ENCODE measurements at regions of chr1 and their contacts with region 1.

Region 1: DNA sequence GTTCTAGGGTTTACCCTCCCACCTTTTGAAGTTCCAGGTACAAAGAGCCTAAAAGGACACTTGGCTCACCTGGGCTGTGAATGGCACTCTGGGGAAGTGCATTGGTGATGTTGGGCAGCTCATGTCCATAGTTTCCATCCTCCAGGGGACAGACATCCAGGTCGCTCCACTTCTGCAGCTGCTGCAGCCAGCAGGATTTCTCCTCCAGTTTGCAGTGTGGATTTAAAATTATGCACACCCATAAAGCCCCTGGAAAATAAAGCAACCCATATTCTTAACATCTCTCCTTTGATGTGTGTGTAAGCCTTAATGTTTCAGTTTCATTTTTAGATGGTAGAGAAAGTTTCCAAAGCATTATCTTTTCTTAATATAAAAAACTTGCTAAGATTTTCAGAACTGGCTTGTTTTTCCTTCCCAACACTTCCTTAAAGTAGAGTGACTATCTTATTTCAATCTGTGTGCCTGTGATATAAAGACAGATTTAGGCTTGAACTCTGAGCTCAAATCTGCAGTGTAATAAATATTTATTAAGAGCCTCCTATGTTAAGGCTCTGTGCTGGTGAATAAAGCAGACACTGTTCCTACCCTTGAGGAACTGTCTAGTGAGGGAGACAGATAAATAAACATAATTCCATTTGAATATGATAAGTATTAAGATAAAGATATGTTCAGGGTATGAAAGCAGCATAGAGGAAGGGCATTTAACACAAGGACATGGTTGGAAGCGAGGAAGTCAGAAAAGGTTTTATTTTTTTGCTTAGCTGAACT is 39.1 kb downstream of the UROD start:
- DNase-seq: peak in 1 of 5 donors; percentile 30
- H3K4me3 ChIP-seq: peak overlapping the region; percentile 54
- H3K4me3 Mint-ChIP-seq: peak overlapping the region; percentile 28 to 86 (median 81)
- H3K27ac ChIP-seq: peak overlapping the region; percentile 22
- H3K27ac Mint-ChIP-seq: peak overlapping the region; percentile 62 to 95 (median 87)
- H3K4me1 ChIP-seq: peaks cover 14% of the 10 kb centered on the region
- H3K4me1 Mint-ChIP-seq: peaks cover 12 to 21% (median 15%) of the 10 kb centered on the region in 3 donors
- H3K27me3 ChIP-seq: no peaks in the 10 kb centered on the region
- H3K27me3 Mint-ChIP-seq: peaks cover 0 to 2% of the 10 kb centered on the region in 2 donors

Region 2: DNA sequence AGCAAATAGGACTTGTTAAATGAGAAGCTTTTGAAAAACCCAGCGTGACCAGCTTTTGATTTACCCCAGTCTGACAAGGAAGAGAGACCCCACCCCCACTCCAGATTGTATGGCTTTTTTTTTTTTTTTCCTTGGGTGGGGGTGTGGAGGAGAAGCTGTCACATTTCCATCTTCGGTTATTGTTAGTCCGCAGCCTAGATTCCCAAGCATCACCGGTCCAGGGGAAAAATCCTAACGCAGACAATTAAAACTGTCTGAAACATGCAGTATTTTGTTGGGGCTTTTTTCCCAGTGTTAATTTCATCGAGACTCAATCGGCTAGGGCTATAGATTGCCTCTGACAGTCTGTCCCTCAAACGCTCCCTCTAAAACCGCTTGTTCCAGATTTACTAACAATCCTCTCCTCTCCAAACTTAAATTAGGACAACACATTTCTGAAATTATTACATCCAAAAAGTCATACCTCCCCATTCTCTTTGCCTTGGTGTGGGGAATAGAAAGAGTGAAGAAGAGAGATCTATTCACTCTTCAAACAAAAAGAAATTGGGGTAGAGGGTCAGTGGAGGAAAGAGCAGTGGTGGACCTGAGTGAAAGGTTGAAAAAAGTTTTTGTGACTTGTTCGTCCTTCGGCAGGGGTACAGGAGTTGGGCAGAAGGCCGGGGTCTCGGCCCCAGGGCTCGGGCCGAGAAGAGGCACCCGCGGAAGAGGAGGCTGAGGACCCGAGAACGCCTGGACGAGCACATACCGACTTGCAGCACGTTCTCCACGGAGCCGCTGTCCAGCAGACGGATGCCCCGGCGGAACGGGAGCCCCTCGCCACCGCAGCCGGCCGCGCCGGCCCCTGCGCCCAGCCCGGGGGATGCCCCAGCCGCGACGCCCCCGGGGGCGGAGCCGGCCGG is 154.1 kb after region 1 on chr1:
- CTCF ChIA-PET with region 1: no interaction called
- POLR2A ChIA-PET with region 1: interaction called, 11 read pairs
- DNase-seq: peak in 4 of 5 donors; percentile 4 to 50 (median 16)
- H3K4me3 ChIP-seq: peak overlapping the region; percentile 29
- H3K4me3 Mint-ChIP-seq: peak overlapping the region; percentile 91 to 98 (median 94)
- H3K27ac ChIP-seq: no peak overlapping the region
- H3K27ac Mint-ChIP-seq: peak overlapping the region; percentile 63 to 96 (median 89)
- H3K4me1 ChIP-seq: peaks cover 24% of the 10 kb centered on the region
- H3K4me1 Mint-ChIP-seq: peaks cover 33 to 51% (median 39%) of the 10 kb centered on the region in 3 donors
- H3K27me3 ChIP-seq: no peaks in the 10 kb centered on the region
- H3K27me3 Mint-ChIP-seq: peaks cover 4 to 7% of the 10 kb centered on the region in 2 donors

Measured in CD8-positive, alpha-beta memory T cell (primary cell).